Sigmoid colon (tissue), 7 donors: ENCODE measurements at regions of chr5 and their contacts with region 1.

Region 1: DNA sequence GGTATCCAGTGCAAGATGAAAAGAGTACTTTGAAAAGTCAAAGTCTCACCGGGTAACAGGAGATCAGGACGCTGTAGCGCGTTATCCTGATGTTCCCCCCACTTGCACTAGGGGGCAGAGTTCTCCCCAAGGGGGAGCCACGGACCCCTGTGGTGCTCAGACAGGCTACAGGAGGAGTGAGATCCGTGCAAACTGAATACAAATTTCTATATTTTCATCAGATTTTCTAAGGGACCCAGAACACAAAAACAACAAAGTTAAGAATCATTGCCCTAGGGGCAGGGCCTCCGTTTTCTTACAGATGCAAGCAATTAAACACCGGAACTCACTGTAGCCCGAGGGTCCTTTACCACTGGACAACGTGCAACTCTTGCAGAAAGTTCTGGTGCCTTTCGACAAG is 2.0 kb downstream of the MYO10 start:
- DNase-seq: peak; percentile 69
- H3K4me3 ChIP-seq: peak overlapping the region in 3 of 4 donors; percentile 57 to 61 (median 58)
- H3K27ac ChIP-seq: no peak overlapping the region
- H3K4me1 ChIP-seq: peaks cover 0 to 30% (median 27%) of the 10 kb centered on the region in 4 donors
- H3K27me3 ChIP-seq: peaks cover 25 to 80% (median 50%) of the 10 kb centered on the region in 3 donors
- CTCF ChIP-seq: peak in 2 of 4 experiments; percentile 55 to 57
- EP300 ChIP-seq: no peak
- POLR2A ChIP-seq: no peak

Region 2: DNA sequence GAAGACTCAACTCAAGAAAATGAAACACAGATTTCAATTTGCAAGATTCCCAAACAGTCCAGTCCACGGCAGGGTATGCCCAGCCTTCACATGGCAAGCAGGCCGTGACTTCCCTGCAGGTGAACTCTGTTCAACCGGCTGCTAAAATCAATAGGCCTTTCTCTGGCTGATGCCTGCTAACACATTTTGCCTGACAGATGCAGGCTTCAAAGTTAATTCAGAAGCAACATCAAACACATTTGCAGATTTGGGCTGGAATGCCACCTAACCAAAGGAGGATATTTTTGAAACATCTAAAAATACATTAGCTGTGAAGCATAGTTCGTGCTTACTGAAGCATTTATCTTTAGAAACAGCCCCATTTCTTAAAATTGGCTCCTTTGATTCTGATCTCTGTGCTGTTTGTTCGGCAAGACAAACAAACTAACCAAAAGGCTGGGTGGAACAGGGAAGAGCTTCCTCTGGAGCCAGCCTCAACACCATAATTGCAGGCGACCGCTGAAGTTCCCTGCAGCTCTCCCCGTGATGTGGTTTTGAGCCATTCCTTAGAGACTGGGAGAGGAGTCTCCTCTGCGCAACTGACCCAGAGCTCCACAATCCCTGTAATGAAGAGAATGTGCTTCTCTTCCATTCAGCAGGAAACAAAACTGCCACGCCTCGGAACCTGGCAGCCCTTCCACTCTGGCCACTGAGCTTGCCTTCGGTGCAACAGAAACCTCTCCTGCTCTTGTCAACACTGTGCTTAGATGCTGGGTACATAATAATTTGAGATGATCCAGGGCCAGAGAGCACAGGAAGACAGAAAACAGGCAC is 124.5 kb before region 1 on chr5:
- intact Hi-C with region 1: loop called (anchors 10 kb)
- DNase-seq: no peak
- H3K4me3 ChIP-seq: no peak overlapping the region
- H3K27ac ChIP-seq: peak overlapping the region in 1 of 4 donors; percentile 41
- H3K4me1 ChIP-seq: peaks cover 0 to 14% (median 10%) of the 10 kb centered on the region in 4 donors
- H3K27me3 ChIP-seq: no peaks in the 10 kb centered on the region
- CTCF ChIP-seq: no peak
- EP300 ChIP-seq: no peak
- POLR2A ChIP-seq: no peak

Region 3: GRCh38 chr5:17189381-17190036 is 255.4 kb after region 1 on chr5:
- intact Hi-C with region 1: loop called (anchors 5 kb)
- DNase-seq: peak; percentile 80
- H3K4me3 ChIP-seq: no peak overlapping the region
- H3K27ac ChIP-seq: peak overlapping the region in 1 of 4 donors; percentile 6
- H3K4me1 ChIP-seq: peaks cover 0 to 11% (median 0%) of the 10 kb centered on the region in 4 donors
- H3K27me3 ChIP-seq: no peaks in the 10 kb centered on the region
- CTCF ChIP-seq: peak; percentile 22 to 75 (median 66)
- EP300 ChIP-seq: no peak
- POLR2A ChIP-seq: no peak